Esophagus muscularis mucosa (tissue), 4 donors: ENCODE measurements at regions of chr11 and their contacts with region 1.

Region 1: GRCh38 chr11:65961232-65961901 is at the start of gene SART1:
- DNase-seq: peak; percentile 99
- H3K4me3 ChIP-seq: peak within 1 kb of the TSS; percentile 92 to 99 (median 96)
- H3K27ac ChIP-seq: peak within 1 kb of the TSS; percentile 84 to 92 (median 91)
- H3K4me1 ChIP-seq: peaks cover 23 to 34% (median 32%) of the 10 kb centered on the region in 4 donors
- H3K27me3 ChIP-seq: peaks cover 0 to 14% (median 0%) of the 10 kb centered on the region in 4 donors
- CTCF ChIP-seq: peak in 1 of 3 experiments; percentile 43
- EP300 ChIP-seq: no peak
- POLR2A ChIP-seq: peak; percentile 18
- total RNA-seq, gene SART1: 47.8 to 65.0 (median 58.7) TPM

Region 2: DNA sequence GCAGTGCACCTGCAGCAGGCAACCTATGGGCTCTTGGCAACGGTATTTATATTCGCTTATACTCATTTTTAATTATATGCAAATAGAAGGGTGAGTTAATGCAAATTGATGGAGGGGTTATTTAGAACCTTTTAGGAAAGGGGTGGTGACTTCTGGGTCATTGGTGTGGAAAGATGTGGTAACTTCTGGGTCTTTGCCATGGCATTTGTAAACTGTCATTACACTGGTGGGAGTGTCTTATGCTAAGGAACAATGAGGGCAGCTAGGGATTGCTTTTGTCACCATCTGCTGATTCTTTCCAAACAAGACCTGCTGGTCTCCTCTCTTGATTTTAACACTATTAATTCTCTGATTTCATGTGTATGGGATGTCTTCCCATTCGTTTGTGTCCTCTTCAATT is 261.0 kb before region 1 on chr11:
- intact Hi-C with region 1: no loop called
- DNase-seq: no peak
- H3K4me3 ChIP-seq: no peak overlapping the region
- H3K27ac ChIP-seq: no peak overlapping the region
- H3K4me1 ChIP-seq: peaks cover 6 to 11% (median 9%) of the 10 kb centered on the region in 4 donors
- H3K27me3 ChIP-seq: peaks cover 0 to 3% (median 0%) of the 10 kb centered on the region in 4 donors
- CTCF ChIP-seq: no peak
- EP300 ChIP-seq: no peak
- POLR2A ChIP-seq: no peak

Region 3: DNA sequence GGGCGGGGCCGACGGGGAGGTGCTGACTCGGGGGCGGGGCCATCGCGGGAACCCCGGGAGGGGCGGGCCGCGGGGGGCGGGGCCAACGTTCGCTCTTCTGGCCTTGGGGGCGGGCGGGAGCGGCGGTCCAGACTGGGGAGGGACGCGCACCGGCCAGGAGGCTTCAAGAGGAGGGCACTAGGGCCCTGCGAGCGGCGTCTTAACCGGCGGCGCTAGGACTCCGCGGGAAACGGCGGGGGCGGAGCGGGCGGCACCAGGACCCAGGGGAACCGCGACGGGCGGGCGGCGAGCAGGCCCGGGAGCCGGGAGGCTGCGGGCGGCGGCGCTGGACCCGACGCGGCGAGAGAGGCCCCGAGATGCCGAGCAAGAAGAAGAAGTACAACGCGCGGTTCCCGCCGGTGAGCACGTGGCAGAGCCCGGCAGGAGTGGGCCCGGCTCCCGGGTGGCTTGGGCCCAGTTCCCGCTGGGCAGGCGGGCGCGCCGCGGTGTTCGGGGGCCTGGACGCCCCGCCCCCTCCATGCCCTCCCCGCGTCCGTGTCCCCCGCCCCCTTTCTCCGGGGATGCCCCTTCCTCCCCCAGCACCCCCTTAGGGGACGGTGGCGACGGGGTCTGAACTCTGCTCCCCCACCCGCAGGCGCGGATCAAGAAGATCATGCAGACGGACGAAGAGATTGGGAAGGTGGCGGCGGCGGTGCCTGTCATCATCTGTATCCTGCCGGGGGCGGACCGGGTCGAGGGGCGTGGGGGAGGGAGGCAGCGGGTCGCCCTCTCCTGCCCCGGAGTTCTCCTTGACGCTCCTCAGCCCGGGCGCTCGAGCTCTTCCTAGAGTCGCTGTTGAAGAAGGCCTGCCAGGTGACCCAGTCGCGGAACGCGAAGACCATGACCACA is 42.0 kb before region 1 on chr11 and contains the start of gene DRAP1:
- intact Hi-C with region 1: loop called (anchors 5 kb)
- DNase-seq: peak; percentile 99
- H3K4me3 ChIP-seq: peak within 1 kb of the TSS; percentile 68 to 99 (median 88)
- H3K27ac ChIP-seq: peak within 1 kb of the TSS; percentile 91 to 99 (median 96)
- H3K4me1 ChIP-seq: peaks cover 49 to 61% (median 58%) of the 10 kb centered on the region in 4 donors
- H3K27me3 ChIP-seq: no peaks in the 10 kb centered on the region
- CTCF ChIP-seq: peak in 1 of 3 experiments; percentile 36
- EP300 ChIP-seq: no peak
- POLR2A ChIP-seq: peak; percentile 60
- total RNA-seq, gene DRAP1: 78.4 to 122 (median 101) TPM

Region 4: GRCh38 chr11:66001942-66002647 is 40.7 kb after region 1 on chr11 and contains the starts of genes BANF1 and EIF1AD:
- intact Hi-C with region 1: loop called (anchors 5 kb)
- DNase-seq: peak; percentile 97
- H3K4me3 ChIP-seq: peak within 1 kb of the TSS; percentile 69 to 93 (median 85)
- H3K27ac ChIP-seq: peak within 1 kb of the TSS; percentile 86 to 95 (median 94)
- H3K4me1 ChIP-seq: peaks cover 20 to 38% (median 29%) of the 10 kb centered on the region in 4 donors
- H3K27me3 ChIP-seq: no peaks in the 10 kb centered on the region
- CTCF ChIP-seq: peak in 1 of 3 experiments; percentile 6
- EP300 ChIP-seq: no peak
- POLR2A ChIP-seq: no peak
- total RNA-seq, gene BANF1: 46.9 to 72.5 (median 57.9) TPM
- total RNA-seq, gene EIF1AD: 25.3 to 34.9 (median 28.2) TPM